ENCODE measurements at regions of chrX and their contacts with region 1.

Region 1: GRCh38 chrX:39261446-39262147 is 460.3 kb downstream of the MID1IP1 start:
- DNase-seq: peak; percentile 23
- H3K4me3 ChIP-seq: no peak overlapping the region
- H3K27ac ChIP-seq: no peak overlapping the region
- H3K4me1 ChIP-seq: no peaks in the 10 kb centered on the region
- CTCF ChIP-seq: peak; percentile 73

Region 2: GRCh38 chrX:39445336-39445735 is 183.7 kb after region 1 on chrX:
- CTCF ChIA-PET with region 1: no interaction called
- POLR2A ChIA-PET with region 1: no interaction called
- intact Hi-C with region 1: loop called (anchors 10 kb)
- DNase-seq: peak; percentile 11
- H3K4me3 ChIP-seq: no peak overlapping the region
- H3K27ac ChIP-seq: no peak overlapping the region
- H3K4me1 ChIP-seq: no peaks in the 10 kb centered on the region
- CTCF ChIP-seq: peak; percentile 63